CD4-positive, alpha-beta T cell (primary cell): ENCODE measurements at regions of chr12 and their contacts with region 1.

Region 1: GRCh38 chr12:14629832-14630710 is 62.4 kb upstream of the PLBD1 start:
- DNase-seq: peak; percentile 36 to 81 (median 52)
- ATAC-seq: peak; percentile 100
- H3K4me3 ChIP-seq: no peak overlapping the region
- H3K4me3 Mint-ChIP-seq: no peak overlapping the region
- H3K27ac ChIP-seq: no peak overlapping the region
- H3K27ac Mint-ChIP-seq: no peak overlapping the region
- H3K4me1 ChIP-seq: no peaks in the 10 kb centered on the region
- H3K4me1 Mint-ChIP-seq: no peaks in the 10 kb centered on the region
- H3K27me3 ChIP-seq: no peaks in the 10 kb centered on the region
- H3K27me3 Mint-ChIP-seq: peaks cover 4% of the 10 kb centered on the region
- CTCF ChIP-seq: peak; percentile 100

Region 2: DNA sequence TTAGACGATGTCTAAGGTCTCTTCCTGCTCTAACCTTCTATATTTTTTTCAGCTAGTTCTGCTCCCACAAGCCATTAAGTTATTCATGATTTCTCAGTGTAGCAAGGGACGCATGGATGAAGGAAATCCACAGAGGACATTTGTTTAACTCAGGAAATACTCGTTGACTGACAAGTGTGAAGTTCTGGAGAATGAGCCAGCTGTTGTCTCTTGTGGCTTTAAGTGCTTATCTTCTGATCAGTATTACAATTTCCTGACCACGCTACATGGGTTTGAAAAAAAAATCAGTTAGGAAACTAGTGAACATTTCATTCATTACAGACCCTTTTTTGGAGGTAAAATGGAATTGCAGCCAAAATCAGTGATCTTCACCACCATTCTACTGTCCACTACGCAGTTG is 13.2 kb after region 1 on chr12:
- CTCF ChIA-PET with region 1: no interaction called
- POLR2A ChIA-PET with region 1: no interaction called
- intact Hi-C with region 1: loop called in 1 of 2 experiments (anchors 1 kb)
- DNase-seq: peak in 3 of 14 experiments; percentile 49 to 64 (median 62)
- ATAC-seq: peak; percentile 49
- H3K4me3 ChIP-seq: no peak overlapping the region
- H3K4me3 Mint-ChIP-seq: peak overlapping the region; percentile 82
- H3K27ac ChIP-seq: no peak overlapping the region
- H3K27ac Mint-ChIP-seq: peak overlapping the region; percentile 58
- H3K4me1 ChIP-seq: peaks cover 17% of the 10 kb centered on the region
- H3K4me1 Mint-ChIP-seq: peaks cover 27% of the 10 kb centered on the region
- H3K27me3 ChIP-seq: no peaks in the 10 kb centered on the region
- H3K27me3 Mint-ChIP-seq: no peaks in the 10 kb centered on the region
- CTCF ChIP-seq: no peak

Region 3: GRCh38 chr12:14664510-14664909 is 34.4 kb after region 1 on chr12:
- CTCF ChIA-PET with region 1: interaction called, 7 read pairs
- POLR2A ChIA-PET with region 1: no interaction called
- intact Hi-C with region 1: loop called (anchors 1 kb)
- DNase-seq: peak in 10 of 14 experiments; percentile 11 to 74 (median 28)
- ATAC-seq: peak; percentile 97
- H3K4me3 ChIP-seq: no peak overlapping the region
- H3K4me3 Mint-ChIP-seq: no peak overlapping the region
- H3K27ac ChIP-seq: no peak overlapping the region
- H3K27ac Mint-ChIP-seq: no peak overlapping the region
- H3K4me1 ChIP-seq: no peaks in the 10 kb centered on the region
- H3K4me1 Mint-ChIP-seq: peaks cover 5% of the 10 kb centered on the region
- H3K27me3 ChIP-seq: peaks cover 0 to 2% of the 10 kb centered on the region in 2 experiments
- H3K27me3 Mint-ChIP-seq: peaks cover 6% of the 10 kb centered on the region
- CTCF ChIP-seq: peak; percentile 77

Region 4: GRCh38 chr12:14716848-14717444 is 86.9 kb after region 1 on chr12:
- CTCF ChIA-PET with region 1: interaction called, 3 read pairs
- POLR2A ChIA-PET with region 1: no interaction called
- intact Hi-C with region 1: loop called (anchors 1 kb)
- DNase-seq: peak in 13 of 14 experiments; percentile 7 to 76 (median 27)
- ATAC-seq: peak; percentile 74
- H3K4me3 ChIP-seq: no peak overlapping the region
- H3K4me3 Mint-ChIP-seq: no peak overlapping the region
- H3K27ac ChIP-seq: no peak overlapping the region
- H3K27ac Mint-ChIP-seq: no peak overlapping the region
- H3K4me1 ChIP-seq: no peaks in the 10 kb centered on the region
- H3K4me1 Mint-ChIP-seq: no peaks in the 10 kb centered on the region
- H3K27me3 ChIP-seq: no peaks in the 10 kb centered on the region
- H3K27me3 Mint-ChIP-seq: no peaks in the 10 kb centered on the region
- CTCF ChIP-seq: peak; percentile 64

Region 5: DNA sequence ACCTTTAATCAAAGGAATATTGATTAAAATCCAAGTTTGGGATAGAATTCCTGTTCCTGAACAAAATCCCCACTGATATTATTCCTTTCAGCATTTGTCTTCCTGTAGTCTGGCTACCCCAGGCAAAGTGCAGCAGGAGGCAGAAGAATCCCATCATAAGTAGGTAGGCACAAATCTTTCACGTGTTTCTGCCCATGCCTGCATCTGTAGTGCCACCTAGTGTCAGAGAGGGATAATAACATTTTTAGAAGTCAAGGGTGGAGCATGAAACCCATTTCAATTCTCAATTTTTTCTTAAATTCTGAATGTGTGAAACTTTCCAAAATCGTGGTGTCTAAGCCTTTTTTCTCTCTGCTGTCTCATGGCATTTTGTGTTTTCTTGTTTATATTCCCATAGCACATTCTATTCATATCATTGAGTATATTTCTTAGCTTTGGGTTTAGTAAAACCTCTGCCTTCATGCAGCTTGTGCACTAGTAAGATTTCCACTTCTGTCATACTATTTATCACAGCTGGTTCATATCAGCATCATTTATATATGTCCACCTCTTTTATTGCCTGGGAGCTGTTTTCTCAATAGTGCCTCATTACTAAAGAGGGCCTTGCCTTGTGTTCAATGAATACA is 639.0 kb after region 1 on chr12:
- CTCF ChIA-PET with region 1: no interaction called
- POLR2A ChIA-PET with region 1: no interaction called
- intact Hi-C with region 1: loop called in 1 of 2 experiments (anchors 5 kb)
- DNase-seq: peak in 11 of 14 experiments; percentile 3 to 74 (median 15)
- ATAC-seq: peak; percentile 77
- H3K4me3 ChIP-seq: no peak overlapping the region
- H3K4me3 Mint-ChIP-seq: no peak overlapping the region
- H3K27ac ChIP-seq: no peak overlapping the region
- H3K27ac Mint-ChIP-seq: no peak overlapping the region
- H3K4me1 ChIP-seq: no peaks in the 10 kb centered on the region
- H3K4me1 Mint-ChIP-seq: no peaks in the 10 kb centered on the region
- H3K27me3 ChIP-seq: peaks cover 2 to 5% of the 10 kb centered on the region in 2 experiments
- H3K27me3 Mint-ChIP-seq: peaks cover 9% of the 10 kb centered on the region
- CTCF ChIP-seq: peak; percentile 88

Region 6: GRCh38 chr12:15417691-15418090 is 787.6 kb after region 1 on chr12:
- CTCF ChIA-PET with region 1: no interaction called
- POLR2A ChIA-PET with region 1: no interaction called
- intact Hi-C with region 1: no loop called
- DNase-seq: no peak
- ATAC-seq: no peak
- H3K4me3 ChIP-seq: no peak overlapping the region
- H3K4me3 Mint-ChIP-seq: no peak overlapping the region
- H3K27ac ChIP-seq: no peak overlapping the region
- H3K27ac Mint-ChIP-seq: no peak overlapping the region
- H3K4me1 ChIP-seq: no peaks in the 10 kb centered on the region
- H3K4me1 Mint-ChIP-seq: no peaks in the 10 kb centered on the region
- H3K27me3 ChIP-seq: peaks cover 3 to 7% of the 10 kb centered on the region in 2 experiments
- H3K27me3 Mint-ChIP-seq: peaks cover 34% of the 10 kb centered on the region
- CTCF ChIP-seq: no peak